B cell (primary cell): ENCODE measurements at regions of chr6 and their contacts with region 1.

Region 1: GRCh38 chr6:150016324-150017185 is 8.8 kb downstream of the RAET1L start:
- DNase-seq: peak; percentile 85
- ATAC-seq: peak; percentile 78
- H3K4me3 ChIP-seq: no peak overlapping the region
- H3K4me3 Mint-ChIP-seq: peak overlapping the region; percentile 4
- H3K27ac ChIP-seq: no peak overlapping the region
- H3K27ac Mint-ChIP-seq: no peak overlapping the region
- H3K4me1 ChIP-seq: peaks cover 12 to 13% of the 10 kb centered on the region in 2 donors
- H3K4me1 Mint-ChIP-seq: peaks cover 13% of the 10 kb centered on the region
- H3K27me3 ChIP-seq: peaks cover 0 to 51% (median 36%) of the 10 kb centered on the region in 4 experiments
- H3K27me3 Mint-ChIP-seq: peaks cover 66% of the 10 kb centered on the region
- CTCF ChIP-seq: peak; percentile 80

Region 2: GRCh38 chr6:149473080-149474052 is 543.2 kb before region 1 on chr6:
- CTCF ChIA-PET with region 1: no interaction called
- POLR2A ChIA-PET with region 1: no interaction called
- intact Hi-C with region 1: no loop called
- DNase-seq: peak; percentile 65
- ATAC-seq: peak; percentile 34
- H3K4me3 ChIP-seq: peak overlapping the region in 4 of 5 experiments; percentile 5 to 55 (median 38)
- H3K4me3 Mint-ChIP-seq: peak overlapping the region; percentile 89
- H3K27ac ChIP-seq: peak overlapping the region; percentile 67 to 84
- H3K27ac Mint-ChIP-seq: peak overlapping the region; percentile 94
- H3K4me1 ChIP-seq: peaks cover 87 to 98% of the 10 kb centered on the region in 2 donors
- H3K4me1 Mint-ChIP-seq: peaks cover 84% of the 10 kb centered on the region
- H3K27me3 ChIP-seq: no peaks in the 10 kb centered on the region
- H3K27me3 Mint-ChIP-seq: no peaks in the 10 kb centered on the region
- CTCF ChIP-seq: peak; percentile 48

Region 3: DNA sequence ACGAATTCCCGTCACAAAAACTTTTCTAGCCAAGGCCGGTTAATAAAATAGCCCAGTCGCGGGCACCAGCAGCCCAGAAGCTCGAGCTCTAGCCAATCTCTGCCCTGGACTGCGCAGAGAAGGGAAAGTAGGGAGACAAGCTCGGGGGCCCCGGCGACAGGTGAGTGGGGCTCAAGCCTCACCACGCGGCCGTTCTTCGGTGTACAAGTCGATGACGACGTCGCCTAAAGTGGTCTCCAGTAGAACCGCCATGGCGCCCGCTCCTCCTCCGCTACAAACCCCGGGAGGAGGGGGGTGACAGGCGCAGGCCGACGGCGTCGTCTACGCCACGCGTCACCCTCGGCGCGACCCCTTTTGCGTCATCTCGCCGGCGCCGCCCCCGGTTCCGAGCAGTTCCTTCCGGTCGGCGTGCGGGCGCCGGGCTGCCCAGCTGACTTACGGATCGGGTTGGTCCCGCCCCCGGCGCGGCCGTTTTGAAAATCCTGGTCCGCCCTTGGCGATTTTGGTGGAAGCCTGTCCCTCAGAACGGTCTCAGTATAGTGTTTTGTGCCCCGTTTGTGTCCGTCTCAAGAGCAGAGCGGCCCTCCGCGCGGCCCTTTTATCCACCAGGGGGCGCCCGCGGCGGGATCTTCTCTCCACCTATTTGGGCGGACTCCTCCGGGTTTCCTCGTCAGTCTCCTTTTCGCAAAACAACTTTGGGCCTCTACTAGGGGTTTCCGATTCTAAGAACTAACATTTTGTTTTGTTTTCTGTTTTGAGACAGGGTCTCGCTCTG is 470.6 kb before region 1 on chr6 and contains the start of gene PPIL4:
- CTCF ChIA-PET with region 1: no interaction called
- POLR2A ChIA-PET with region 1: no interaction called
- intact Hi-C with region 1: loop called (anchors 5 kb)
- DNase-seq: peak; percentile 98
- ATAC-seq: peak; percentile 90
- H3K4me3 ChIP-seq: peak within 1 kb of the TSS; percentile 96 to 100 (median 98)
- H3K4me3 Mint-ChIP-seq: peak within 1 kb of the TSS; percentile 98
- H3K27ac ChIP-seq: peak within 1 kb of the TSS; percentile 99
- H3K27ac Mint-ChIP-seq: peak within 1 kb of the TSS; percentile 98
- H3K4me1 ChIP-seq: peaks cover 17 to 22% of the 10 kb centered on the region in 2 donors
- H3K4me1 Mint-ChIP-seq: peaks cover 39% of the 10 kb centered on the region
- H3K27me3 ChIP-seq: no peaks in the 10 kb centered on the region
- H3K27me3 Mint-ChIP-seq: peaks cover 6% of the 10 kb centered on the region
- CTCF ChIP-seq: peak; percentile 83
- total RNA-seq, gene PPIL4: 34.3 and 36.1 TPM in 2 replicates

Region 4: DNA sequence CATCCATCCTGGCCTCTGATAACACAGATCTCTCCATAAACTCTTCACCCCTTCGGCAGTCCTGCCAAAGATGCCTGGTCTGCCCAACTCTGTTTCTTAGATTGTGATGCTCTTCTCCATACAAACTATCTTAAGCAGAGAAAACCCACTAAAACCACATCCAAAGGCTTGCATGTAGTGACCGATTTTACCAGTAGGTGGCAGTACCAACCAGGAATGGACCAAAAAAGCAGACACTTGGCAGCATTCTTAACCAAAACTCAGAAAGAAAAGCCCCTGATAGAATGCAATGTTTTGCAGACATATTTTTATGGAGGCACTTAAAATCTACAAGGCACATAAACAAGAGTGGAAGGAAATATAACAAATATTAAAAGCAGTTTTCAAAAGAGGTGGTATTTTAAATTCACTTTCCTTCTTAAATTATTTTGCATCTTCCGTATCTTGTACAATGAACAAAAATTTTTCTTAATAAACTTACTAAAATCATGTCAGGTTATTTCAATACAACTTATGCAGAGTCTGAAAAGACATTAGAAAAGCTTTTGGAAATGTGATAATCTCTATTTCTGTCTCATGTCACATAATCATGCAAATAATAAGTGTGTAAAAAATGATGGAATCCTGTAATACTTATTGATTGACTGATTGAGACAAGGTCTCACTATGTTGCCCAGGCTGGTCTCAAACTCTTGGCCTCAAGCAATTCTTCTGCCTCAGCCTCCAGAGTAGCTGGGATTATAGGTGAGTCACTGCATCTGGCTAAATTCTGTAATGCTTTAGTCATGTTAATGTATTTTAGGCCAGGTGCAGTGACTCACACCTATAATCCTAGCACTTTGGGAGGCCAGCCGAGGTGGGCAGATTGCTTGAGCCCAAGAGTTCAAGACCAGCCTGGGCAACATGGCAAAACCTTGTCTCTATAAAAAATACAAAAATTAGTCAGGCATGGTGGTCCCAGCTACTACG is 181.8 kb before region 1 on chr6:
- CTCF ChIA-PET with region 1: interaction called, 24 read pairs
- POLR2A ChIA-PET with region 1: no interaction called
- intact Hi-C with region 1: loop called (anchors 1 kb)
- DNase-seq: peak; percentile 78
- ATAC-seq: peak; percentile 70
- H3K4me3 ChIP-seq: no peak overlapping the region
- H3K4me3 Mint-ChIP-seq: no peak overlapping the region
- H3K27ac ChIP-seq: no peak overlapping the region
- H3K27ac Mint-ChIP-seq: no peak overlapping the region
- H3K4me1 ChIP-seq: no peaks in the 10 kb centered on the region
- H3K4me1 Mint-ChIP-seq: no peaks in the 10 kb centered on the region
- H3K27me3 ChIP-seq: peaks cover 0 to 8% (median 0%) of the 10 kb centered on the region in 4 experiments
- H3K27me3 Mint-ChIP-seq: peaks cover 21% of the 10 kb centered on the region
- CTCF ChIP-seq: peak; percentile 94

Region 5: DNA sequence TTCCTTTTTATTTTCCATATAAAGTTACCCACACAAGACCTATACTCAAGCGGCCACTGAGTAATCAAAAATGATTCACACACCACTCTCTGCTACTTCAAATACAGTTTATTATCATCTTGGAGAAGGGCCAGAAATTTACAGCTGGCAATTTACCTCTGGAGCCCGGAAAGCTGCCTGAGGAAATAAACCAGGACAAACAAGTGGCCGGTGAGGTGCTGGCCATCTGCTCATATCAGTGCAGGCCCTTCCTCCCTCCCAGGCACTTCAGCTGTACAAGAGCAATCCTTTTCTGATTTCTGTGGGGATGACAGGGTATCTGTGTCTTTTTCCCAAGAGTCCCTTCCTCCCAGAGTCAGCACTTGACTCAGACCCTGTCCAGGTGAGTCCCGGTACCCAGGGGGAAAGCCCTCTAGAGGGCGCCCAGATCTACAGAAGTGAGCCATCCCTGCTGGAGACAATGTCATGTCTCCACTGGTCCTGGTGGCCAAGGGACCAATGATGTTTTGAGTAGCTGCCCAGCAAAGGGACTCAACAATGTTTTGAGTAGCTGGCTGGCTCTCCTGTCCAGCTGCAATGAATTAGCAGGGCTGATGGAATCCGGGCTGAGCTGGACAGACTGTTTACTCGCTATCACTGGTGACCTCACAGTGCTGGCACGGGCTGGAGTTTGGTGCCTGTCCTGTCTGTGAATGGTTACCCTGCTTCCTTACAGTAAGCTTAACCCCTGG is 176.0 kb before region 1 on chr6:
- CTCF ChIA-PET with region 1: interaction called, 24 read pairs
- POLR2A ChIA-PET with region 1: no interaction called
- intact Hi-C with region 1: no loop called
- DNase-seq: peak; percentile 55
- ATAC-seq: peak; percentile 41
- H3K4me3 ChIP-seq: no peak overlapping the region
- H3K4me3 Mint-ChIP-seq: no peak overlapping the region
- H3K27ac ChIP-seq: no peak overlapping the region
- H3K27ac Mint-ChIP-seq: no peak overlapping the region
- H3K4me1 ChIP-seq: no peaks in the 10 kb centered on the region
- H3K4me1 Mint-ChIP-seq: no peaks in the 10 kb centered on the region
- H3K27me3 ChIP-seq: peaks cover 0 to 5% (median 2%) of the 10 kb centered on the region in 4 experiments
- H3K27me3 Mint-ChIP-seq: peaks cover 45% of the 10 kb centered on the region
- CTCF ChIP-seq: peak; percentile 56